Calu3 (cell line): ENCODE measurements at regions of chr7 and their contacts with region 1.

Region 1: GRCh38 chr7:50782384-50783208 is at the start of gene GRB10:
- DNase-seq: peak; percentile 70
- H3K4me3 Mint-ChIP-seq: peak within 1 kb of the TSS; percentile 72
- H3K27ac Mint-ChIP-seq: no peak within 1 kb of the TSS
- H3K4me1 Mint-ChIP-seq: peaks cover 81% of the 10 kb centered on the region
- H3K27me3 Mint-ChIP-seq: no peaks in the 10 kb centered on the region
- CTCF ChIP-seq: peak; percentile 50
- total RNA-seq, gene GRB10: 86.2 and 90.6 TPM in 2 replicates

Region 2: DNA sequence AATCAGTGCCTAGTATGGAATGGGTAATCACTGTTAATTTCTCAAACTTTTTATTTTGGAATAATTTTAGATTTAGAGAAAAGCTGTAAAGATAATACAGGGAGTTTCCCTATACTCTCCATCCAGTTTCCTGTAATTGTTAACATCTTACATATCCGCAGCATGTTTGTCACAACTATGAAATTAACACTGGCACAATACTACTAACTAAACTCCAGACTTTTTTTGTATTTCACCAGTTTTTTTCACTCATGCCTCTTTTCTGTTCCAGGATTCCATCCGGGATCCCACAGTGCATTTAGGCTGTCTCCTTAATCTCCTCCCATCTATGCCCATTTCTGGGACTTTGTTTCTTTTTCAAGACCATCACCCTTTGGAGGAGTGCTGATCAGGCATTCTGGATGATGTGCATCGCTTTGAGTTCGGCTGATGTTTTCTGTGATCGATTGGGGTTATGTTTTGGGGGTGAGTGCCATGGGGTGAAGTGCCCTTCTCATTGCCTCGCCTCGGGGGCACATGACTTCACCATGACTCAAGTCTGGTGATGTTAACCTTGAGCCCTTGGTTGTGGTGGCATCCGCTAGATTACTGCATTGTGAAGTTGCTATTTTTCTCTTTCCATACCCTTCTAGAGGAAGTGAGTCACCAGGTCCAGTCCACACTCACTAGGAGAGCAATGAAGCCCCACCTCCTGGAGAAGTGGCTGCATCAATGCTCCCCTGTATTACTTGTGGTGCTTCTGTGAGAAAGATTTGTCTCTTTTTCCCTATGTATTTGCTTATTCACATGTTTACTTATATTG is 44.0 kb after region 1 on chr7:
- CTCF ChIA-PET with region 1: interaction called, 3 read pairs
- intact Hi-C with region 1: loop called (anchors 5 kb)
- DNase-seq: peak; percentile 81
- H3K4me3 Mint-ChIP-seq: peak overlapping the region; percentile 7
- H3K27ac Mint-ChIP-seq: peak overlapping the region; percentile 50
- H3K4me1 Mint-ChIP-seq: peaks cover 64% of the 10 kb centered on the region
- H3K27me3 Mint-ChIP-seq: no peaks in the 10 kb centered on the region
- CTCF ChIP-seq: no peak

Region 3: GRCh38 chr7:50921114-50921813 is 138.7 kb after region 1 on chr7:
- CTCF ChIA-PET with region 1: no interaction called
- intact Hi-C with region 1: no loop called
- DNase-seq: peak; percentile 64
- H3K4me3 Mint-ChIP-seq: no peak overlapping the region
- H3K27ac Mint-ChIP-seq: peak overlapping the region; percentile 19
- H3K4me1 Mint-ChIP-seq: peaks cover 35% of the 10 kb centered on the region
- H3K27me3 Mint-ChIP-seq: no peaks in the 10 kb centered on the region
- CTCF ChIP-seq: no peak